Posterior vena cava (tissue), 2 donors: ENCODE measurements at regions of chr1 and their contacts with region 1.

Region 1: GRCh38 chr1:15640667-15641066 is 23.4 kb downstream of the DDI2 start:
- DNase-seq: no peak

Region 2: GRCh38 chr1:15475752-15476314 is 164.8 kb before region 1 on chr1 and contains the start of gene CELA2B:
- intact Hi-C with region 1: no loop called
- DNase-seq: no peak
- total RNA-seq, gene CELA2B: 0.33 TPM in 1 of 2 donors, not detected in the other

Region 3: GRCh38 chr1:15559294-15559761 is 81.3 kb before region 1 on chr1:
- intact Hi-C with region 1: loop called in 1 of 2 experiments (anchors 10 kb)
- DNase-seq: no peak

Region 4: DNA sequence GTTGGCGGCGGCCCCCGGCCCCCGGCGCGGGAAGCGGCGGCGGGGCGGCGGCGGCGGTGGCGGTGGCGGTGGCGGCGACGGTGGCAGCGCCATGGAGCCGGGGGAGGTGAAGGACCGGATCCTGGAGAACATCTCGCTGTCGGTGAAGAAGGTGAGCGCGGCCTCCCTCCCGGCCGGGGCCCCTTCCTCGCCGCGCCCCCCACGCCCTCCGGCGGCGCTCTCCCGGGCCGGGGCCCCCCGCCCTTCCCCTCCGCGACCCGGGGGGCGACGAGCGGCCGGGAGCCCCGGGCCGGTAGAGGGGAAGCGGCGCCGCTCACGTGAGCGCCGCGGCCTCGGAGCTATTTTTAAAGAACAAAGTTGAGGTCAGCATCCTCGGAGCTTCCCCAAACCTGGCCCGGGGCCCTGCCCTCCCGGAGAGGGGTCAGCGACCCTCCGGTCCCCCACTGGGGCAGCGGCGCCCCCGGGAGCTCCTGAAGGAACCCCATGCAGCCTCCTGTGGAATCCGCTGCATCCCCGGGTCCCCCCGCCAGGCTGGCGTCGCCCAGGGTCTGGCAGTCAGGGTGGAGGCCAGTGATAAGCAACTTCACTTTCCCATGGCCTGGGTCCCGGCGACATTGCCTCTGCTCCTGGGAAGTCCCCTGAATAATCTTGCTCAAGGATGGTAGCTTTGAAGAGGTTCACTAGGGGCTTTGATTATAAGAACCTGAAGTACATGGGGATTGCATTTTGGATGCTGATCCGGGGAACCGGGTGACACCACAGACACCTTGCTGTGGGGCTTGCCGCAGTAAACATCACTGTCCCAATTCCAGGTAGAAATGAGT is 44.0 kb after region 1 on chr1:
- intact Hi-C with region 1: no loop called
- DNase-seq: peak; percentile 88